Heart right ventricle (tissue), 16 donors: ENCODE measurements at regions of chr15 and their contacts with region 1.

Region 1: DNA sequence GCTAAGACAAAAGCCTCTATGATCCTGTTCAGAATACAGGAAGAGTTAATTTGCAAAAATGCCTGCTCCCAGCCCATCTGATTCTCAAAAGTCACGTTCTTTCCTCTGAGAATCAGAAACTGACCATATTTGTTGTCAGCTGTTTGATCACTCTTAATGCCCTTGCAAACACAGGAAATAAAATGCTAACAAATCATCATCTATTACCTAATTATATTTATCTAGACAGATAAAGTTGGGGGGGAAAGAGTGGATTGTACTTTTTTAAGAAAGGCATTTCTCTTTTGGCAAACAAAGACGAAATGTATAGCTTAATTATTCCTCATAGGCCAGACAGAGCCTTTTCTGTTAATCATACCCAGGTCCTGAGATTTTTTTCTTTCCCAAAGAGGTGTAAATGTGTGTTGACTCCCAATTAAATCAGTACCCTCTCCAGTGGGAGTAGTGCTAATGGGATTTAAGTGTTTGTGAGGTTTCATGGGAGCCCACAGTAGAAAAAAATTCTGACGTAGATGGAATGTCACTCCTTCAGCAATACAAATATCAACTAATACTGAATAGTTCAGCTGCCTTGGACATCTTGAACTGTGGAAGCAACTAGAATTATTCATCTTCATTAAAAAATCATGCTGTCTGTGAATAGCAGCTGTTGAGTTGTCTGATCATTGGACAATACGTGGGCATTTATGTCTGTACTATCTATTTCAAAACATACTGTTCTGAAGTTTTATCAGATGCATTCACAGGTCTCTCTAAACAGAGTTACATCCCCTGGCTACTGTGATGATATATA is 22.5 kb upstream of the BNIP2 start:
- DNase-seq: no peak
- ATAC-seq: no peak
- H3K4me3 ChIP-seq: no peak overlapping the region
- H3K27ac ChIP-seq: no peak overlapping the region
- H3K4me1 ChIP-seq: no peaks in the 10 kb centered on the region
- H3K27me3 ChIP-seq: peaks cover 0 to 10% (median 0%) of the 10 kb centered on the region in 7 donors
- CTCF ChIP-seq: no peak

Region 2: GRCh38 chr15:59904450-59905135 is 192.9 kb after region 1 on chr15:
- intact Hi-C with region 1: loop called in 1 of 10 experiments (anchors 5 kb)
- DNase-seq: no peak
- ATAC-seq: no peak
- H3K4me3 ChIP-seq: no peak overlapping the region
- H3K27ac ChIP-seq: no peak overlapping the region
- H3K4me1 ChIP-seq: no peaks in the 10 kb centered on the region
- H3K27me3 ChIP-seq: peaks cover 0 to 93% (median 62%) of the 10 kb centered on the region in 7 donors
- CTCF ChIP-seq: no peak